ENCODE measurements at regions of chr1 and their contacts with region 1.

Region 1: GRCh38 chr1:27321813-27322577 is at the start of gene TMEM222:
- DNase-seq: peak; percentile 93 to 99 (median 96)
- ATAC-seq: peak; percentile 93
- H3K4me3 ChIP-seq: peak within 1 kb of the TSS; percentile 90
- H3K4me3 Mint-ChIP-seq: peak within 1 kb of the TSS; percentile 99
- H3K27ac ChIP-seq: peak within 1 kb of the TSS; percentile 86 to 90
- H3K27ac Mint-ChIP-seq: peak within 1 kb of the TSS; percentile 88
- H3K4me1 ChIP-seq: peaks cover 48% of the 10 kb centered on the region
- H3K4me1 Mint-ChIP-seq: peaks cover 52% of the 10 kb centered on the region
- H3K27me3 ChIP-seq: no peaks in the 10 kb centered on the region
- H3K27me3 Mint-ChIP-seq: peaks cover 4% of the 10 kb centered on the region
- CTCF ChIP-seq: no peak
- total RNA-seq, gene TMEM222: 21.8 to 22.5 TPM

Region 2: GRCh38 chr1:27154991-27155781 is 166.8 kb before region 1 on chr1 and contains the start of gene SLC9A1:
- CTCF ChIA-PET with region 1: no interaction called
- POLR2A ChIA-PET with region 1: no interaction called
- intact Hi-C with region 1: loop called in 1 of 2 experiments (anchors 2 kb)
- DNase-seq: peak; percentile 86 to 97 (median 92)
- ATAC-seq: peak; percentile 93
- H3K4me3 ChIP-seq: peak within 1 kb of the TSS; percentile 93
- H3K4me3 Mint-ChIP-seq: peak within 1 kb of the TSS; percentile 89
- H3K27ac ChIP-seq: peak within 1 kb of the TSS; percentile 84 to 87
- H3K27ac Mint-ChIP-seq: peak within 1 kb of the TSS; percentile 98
- H3K4me1 ChIP-seq: peaks cover 48% of the 10 kb centered on the region
- H3K4me1 Mint-ChIP-seq: peaks cover 47% of the 10 kb centered on the region
- H3K27me3 ChIP-seq: no peaks in the 10 kb centered on the region
- H3K27me3 Mint-ChIP-seq: no peaks in the 10 kb centered on the region
- CTCF ChIP-seq: peak; percentile 80
- total RNA-seq, gene SLC9A1: 14.2 to 19.0 TPM

Region 3: GRCh38 chr1:27234049-27234882 is 87.7 kb before region 1 on chr1 and contains the start of gene WDTC1:
- CTCF ChIA-PET with region 1: no interaction called
- POLR2A ChIA-PET with region 1: no interaction called
- intact Hi-C with region 1: loop called in 1 of 2 experiments (anchors 2 kb)
- DNase-seq: peak; percentile 95 to 99 (median 98)
- ATAC-seq: peak; percentile 92
- H3K4me3 ChIP-seq: peak within 1 kb of the TSS; percentile 62
- H3K4me3 Mint-ChIP-seq: peak within 1 kb of the TSS; percentile 100
- H3K27ac ChIP-seq: peak within 1 kb of the TSS; percentile 70 to 73
- H3K27ac Mint-ChIP-seq: peak within 1 kb of the TSS; percentile 99
- H3K4me1 ChIP-seq: peaks cover 29% of the 10 kb centered on the region
- H3K4me1 Mint-ChIP-seq: peaks cover 38% of the 10 kb centered on the region
- H3K27me3 ChIP-seq: no peaks in the 10 kb centered on the region
- H3K27me3 Mint-ChIP-seq: peaks cover 4% of the 10 kb centered on the region
- CTCF ChIP-seq: no peak
- total RNA-seq, gene WDTC1: 17.7 to 18.6 TPM

Region 4: DNA sequence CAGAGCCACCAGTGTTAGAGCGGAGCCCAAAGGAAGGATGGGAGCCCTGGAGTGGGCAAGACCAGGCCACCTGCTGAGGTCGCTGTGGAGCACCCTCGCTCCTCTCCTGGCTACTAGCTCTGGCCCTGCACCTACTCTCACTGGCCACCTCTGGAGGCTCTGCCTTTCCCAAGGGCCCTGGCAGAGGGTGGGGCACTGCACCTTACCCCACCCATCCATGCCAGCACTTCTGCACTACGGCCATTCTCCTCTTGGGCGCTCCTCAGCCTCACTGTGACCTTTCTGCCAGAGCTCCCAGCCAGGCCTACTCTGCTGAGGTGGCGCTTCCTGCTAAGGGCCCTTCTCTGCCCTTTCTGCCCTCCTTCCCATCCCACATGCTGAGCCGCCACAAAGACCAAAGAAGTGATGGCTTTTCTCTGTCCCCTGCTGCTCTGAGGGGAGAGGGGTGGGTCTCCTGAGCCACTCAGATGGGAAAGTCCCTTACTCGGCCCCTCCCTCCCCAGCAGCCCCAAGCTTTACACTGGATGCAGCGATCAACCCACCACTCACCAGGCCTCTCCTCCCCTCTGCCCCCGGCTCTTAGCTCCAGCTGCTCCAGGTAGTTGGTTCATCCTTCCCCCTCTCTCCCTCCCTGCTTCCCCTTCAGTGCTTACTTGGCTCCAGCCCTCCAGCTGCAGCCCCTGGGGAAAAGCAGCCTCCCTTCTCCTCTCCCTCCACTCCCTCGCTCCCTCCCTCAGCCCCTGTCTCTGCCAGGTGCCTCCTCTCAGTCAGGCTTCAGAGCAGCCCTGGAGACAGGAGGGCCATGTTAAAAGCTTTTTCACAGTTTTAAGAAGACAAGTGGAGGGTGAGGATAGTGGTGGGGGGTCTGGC is 14.9 kb before region 1 on chr1:
- CTCF ChIA-PET with region 1: no interaction called
- POLR2A ChIA-PET with region 1: no interaction called
- intact Hi-C with region 1: no loop called
- DNase-seq: no peak
- ATAC-seq: no peak
- H3K4me3 ChIP-seq: no peak overlapping the region
- H3K4me3 Mint-ChIP-seq: no peak overlapping the region
- H3K27ac ChIP-seq: no peak overlapping the region
- H3K27ac Mint-ChIP-seq: no peak overlapping the region
- H3K4me1 ChIP-seq: no peaks in the 10 kb centered on the region
- H3K4me1 Mint-ChIP-seq: no peaks in the 10 kb centered on the region
- H3K27me3 ChIP-seq: no peaks in the 10 kb centered on the region
- H3K27me3 Mint-ChIP-seq: no peaks in the 10 kb centered on the region
- CTCF ChIP-seq: no peak

Region 5: GRCh38 chr1:27332536-27333281 is 10.7 kb after region 1 on chr1:
- CTCF ChIA-PET with region 1: interaction called, 16 read pairs
- POLR2A ChIA-PET with region 1: interaction called, 6 read pairs
- intact Hi-C with region 1: no loop called
- DNase-seq: peak; percentile 37 to 81 (median 53)
- ATAC-seq: peak; percentile 87
- H3K4me3 ChIP-seq: no peak overlapping the region
- H3K4me3 Mint-ChIP-seq: peak overlapping the region; percentile 56
- H3K27ac ChIP-seq: no peak overlapping the region
- H3K27ac Mint-ChIP-seq: no peak overlapping the region
- H3K4me1 ChIP-seq: peaks cover 32% of the 10 kb centered on the region
- H3K4me1 Mint-ChIP-seq: peaks cover 29% of the 10 kb centered on the region
- H3K27me3 ChIP-seq: no peaks in the 10 kb centered on the region
- H3K27me3 Mint-ChIP-seq: no peaks in the 10 kb centered on the region
- CTCF ChIP-seq: peak; percentile 82

Region 6: DNA sequence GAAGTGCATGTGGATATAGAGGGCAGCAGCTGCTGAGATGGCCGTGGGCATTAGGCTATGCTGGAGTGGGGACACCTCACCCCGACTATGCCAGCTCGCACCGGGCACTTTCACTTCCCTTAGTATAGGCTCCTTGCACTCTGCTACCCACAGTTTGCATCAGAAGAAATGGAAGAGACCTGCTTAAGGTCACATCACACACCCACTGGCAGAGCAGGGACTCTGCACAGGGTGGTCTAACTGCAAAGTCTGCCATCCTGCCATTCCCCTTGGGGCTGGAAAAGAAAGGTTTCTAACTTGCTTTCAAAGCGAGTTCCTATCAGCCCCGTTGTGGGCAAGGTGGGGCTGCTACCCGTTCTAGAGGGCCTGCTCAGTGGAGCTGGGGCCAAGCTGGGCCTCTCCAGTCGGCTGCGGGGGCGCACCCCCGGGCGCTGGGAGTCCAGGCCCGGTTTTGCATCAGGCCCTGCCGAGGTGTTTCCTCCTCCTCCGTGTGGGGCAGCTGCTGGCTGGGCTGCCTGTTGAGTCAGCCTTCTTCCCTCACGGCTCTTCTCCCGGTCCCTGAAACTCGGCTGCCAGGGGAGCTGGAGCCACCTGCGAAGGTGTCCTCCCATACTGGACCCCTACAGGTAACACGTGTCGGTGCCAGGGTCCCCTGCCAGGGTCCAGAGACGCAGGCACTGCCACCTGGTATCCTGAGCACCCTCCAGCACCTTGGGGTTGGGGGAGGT is 19.7 kb after region 1 on chr1 and contains the start of gene SYTL1:
- CTCF ChIA-PET with region 1: interaction called, 8 read pairs
- POLR2A ChIA-PET with region 1: interaction called, 24 read pairs
- intact Hi-C with region 1: loop called (anchors 2 kb)
- DNase-seq: peak; percentile 45 to 82 (median 59)
- ATAC-seq: peak; percentile 61
- H3K4me3 ChIP-seq: peak within 1 kb of the TSS; percentile 89
- H3K4me3 Mint-ChIP-seq: peak within 1 kb of the TSS; percentile 98
- H3K27ac ChIP-seq: peak within 1 kb of the TSS; percentile 80 to 84
- H3K27ac Mint-ChIP-seq: peak within 1 kb of the TSS; percentile 94
- H3K4me1 ChIP-seq: peaks cover 63% of the 10 kb centered on the region
- H3K4me1 Mint-ChIP-seq: peaks cover 64% of the 10 kb centered on the region
- H3K27me3 ChIP-seq: no peaks in the 10 kb centered on the region
- H3K27me3 Mint-ChIP-seq: no peaks in the 10 kb centered on the region
- CTCF ChIP-seq: no peak
- total RNA-seq, gene SYTL1: 135 to 140 TPM

Region 7: GRCh38 chr1:27365372-27366112 is 43.5 kb after region 1 on chr1:
- CTCF ChIA-PET with region 1: interaction called, 3 read pairs
- POLR2A ChIA-PET with region 1: no interaction called
- intact Hi-C with region 1: loop called in 1 of 2 experiments (anchors 5 kb)
- DNase-seq: peak; percentile 62 to 89 (median 78)
- ATAC-seq: peak; percentile 72
- H3K4me3 ChIP-seq: peak overlapping the region; percentile 70
- H3K4me3 Mint-ChIP-seq: peak overlapping the region; percentile 88
- H3K27ac ChIP-seq: no peak overlapping the region
- H3K27ac Mint-ChIP-seq: peak overlapping the region; percentile 43
- H3K4me1 ChIP-seq: peaks cover 49% of the 10 kb centered on the region
- H3K4me1 Mint-ChIP-seq: peaks cover 49% of the 10 kb centered on the region
- H3K27me3 ChIP-seq: no peaks in the 10 kb centered on the region
- H3K27me3 Mint-ChIP-seq: no peaks in the 10 kb centered on the region
- CTCF ChIP-seq: no peak

Region 8: DNA sequence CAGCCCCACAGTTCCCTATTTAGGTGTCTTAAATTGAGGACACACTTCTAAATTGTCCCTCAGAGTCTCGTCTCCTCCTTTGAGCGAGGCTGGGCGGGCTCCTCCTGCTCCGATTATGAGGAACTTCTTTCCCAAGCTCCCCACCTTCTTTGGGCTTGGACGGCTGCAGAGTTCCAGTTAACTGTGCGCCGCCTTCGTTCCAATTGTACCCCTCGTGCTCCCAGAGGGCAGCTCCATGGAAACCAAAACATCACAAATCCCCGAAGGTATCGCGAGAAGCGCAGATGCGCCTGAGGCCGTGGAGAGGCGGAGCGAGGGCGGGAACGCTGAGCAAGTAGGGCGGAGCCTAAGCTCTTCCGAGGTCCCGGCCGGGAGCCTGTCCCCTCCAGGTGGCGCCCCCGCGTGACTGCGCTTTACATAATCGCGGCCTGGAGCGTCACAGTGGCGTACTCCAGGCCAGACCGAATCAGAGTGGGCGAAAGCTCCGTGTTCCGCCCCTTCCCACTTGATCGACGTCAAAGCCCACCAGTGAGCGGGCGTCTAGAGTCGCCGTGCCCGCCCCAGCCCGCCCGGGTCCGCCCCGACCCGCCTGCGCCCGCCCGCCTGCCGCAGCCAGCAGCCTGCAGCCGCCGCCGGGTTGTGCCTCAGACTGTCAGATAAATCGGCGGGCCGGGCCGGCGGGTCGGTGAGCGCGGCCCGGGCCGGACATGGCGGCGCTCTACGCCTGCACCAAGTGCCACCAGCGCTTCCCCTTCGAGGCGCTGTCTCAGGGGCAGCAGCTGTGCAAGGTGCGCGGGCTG is 403.6 kb after region 1 on chr1 and contains the start of gene FAM76A:
- CTCF ChIA-PET with region 1: no interaction called
- POLR2A ChIA-PET with region 1: no interaction called
- intact Hi-C with region 1: loop called in 1 of 2 experiments (anchors 10 kb)
- DNase-seq: peak; percentile 99 to 100 (median 99)
- ATAC-seq: peak; percentile 92
- H3K4me3 ChIP-seq: peak within 1 kb of the TSS; percentile 74
- H3K4me3 Mint-ChIP-seq: peak within 1 kb of the TSS; percentile 85
- H3K27ac ChIP-seq: peak within 1 kb of the TSS; percentile 82 to 85
- H3K27ac Mint-ChIP-seq: peak within 1 kb of the TSS; percentile 89
- H3K4me1 ChIP-seq: peaks cover 19% of the 10 kb centered on the region
- H3K4me1 Mint-ChIP-seq: peaks cover 24% of the 10 kb centered on the region
- H3K27me3 ChIP-seq: no peaks in the 10 kb centered on the region
- H3K27me3 Mint-ChIP-seq: no peaks in the 10 kb centered on the region
- CTCF ChIP-seq: peak; percentile 60
- total RNA-seq, gene FAM76A: 26.0 to 28.7 TPM

Measured in CD4-positive, alpha-beta T cell (primary cell).